SK-N-SH (cell line): ENCODE measurements at regions of chr3 and their contacts with region 1.

Region 1: GRCh38 chr3:58630076-58630709 is 36.4 kb downstream of the FAM3D start:
- DNase-seq: peak; percentile 85
- H3K4me3 ChIP-seq: no peak overlapping the region; a peak in 1 of 4 replicates
- H3K27ac ChIP-seq: no peak overlapping the region
- H3K4me1 ChIP-seq: peaks cover 24 to 35% of the 10 kb centered on the region in 2 experiments; a peak in 3 of 4 replicates
- H3K27me3 ChIP-seq: no peaks in the 10 kb centered on the region
- CTCF ChIP-seq: peak; percentile 92
- EP300 ChIP-seq: no peak
- RAD21 ChIP-seq: peak; percentile 89

Region 2: GRCh38 chr3:58463181-58463941 is 166.8 kb before region 1 on chr3:
- CTCF ChIA-PET with region 1: interaction called, 10 read pairs
- POLR2A ChIA-PET with region 1: no interaction called
- DNase-seq: peak; percentile 85
- H3K4me3 ChIP-seq: no peak overlapping the region; a peak in 1 of 4 replicates
- H3K27ac ChIP-seq: no peak overlapping the region
- H3K4me1 ChIP-seq: peaks cover 0 to 2% of the 10 kb centered on the region in 2 experiments; a peak in 1 of 4 replicates
- H3K27me3 ChIP-seq: no peaks in the 10 kb centered on the region
- CTCF ChIP-seq: peak; percentile 89
- EP300 ChIP-seq: no peak
- RAD21 ChIP-seq: peak; percentile 80

Region 3: GRCh38 chr3:58560771-58561311 is 69.4 kb before region 1 on chr3:
- CTCF ChIA-PET with region 1: interaction called, 446 read pairs
- POLR2A ChIA-PET with region 1: no interaction called
- DNase-seq: no peak
- H3K4me3 ChIP-seq: no peak overlapping the region
- H3K27ac ChIP-seq: no peak overlapping the region
- H3K4me1 ChIP-seq: peaks cover 4 to 6% of the 10 kb centered on the region in 2 experiments; a peak in 1 of 4 replicates
- H3K27me3 ChIP-seq: no peaks in the 10 kb centered on the region
- CTCF ChIP-seq: peak; percentile 63
- EP300 ChIP-seq: peak in 1 of 2 experiments; percentile 70; a peak in 1 of 4 replicates
- RAD21 ChIP-seq: peak; percentile 49; the same call in 1 of the 2 replicates

Region 4: DNA sequence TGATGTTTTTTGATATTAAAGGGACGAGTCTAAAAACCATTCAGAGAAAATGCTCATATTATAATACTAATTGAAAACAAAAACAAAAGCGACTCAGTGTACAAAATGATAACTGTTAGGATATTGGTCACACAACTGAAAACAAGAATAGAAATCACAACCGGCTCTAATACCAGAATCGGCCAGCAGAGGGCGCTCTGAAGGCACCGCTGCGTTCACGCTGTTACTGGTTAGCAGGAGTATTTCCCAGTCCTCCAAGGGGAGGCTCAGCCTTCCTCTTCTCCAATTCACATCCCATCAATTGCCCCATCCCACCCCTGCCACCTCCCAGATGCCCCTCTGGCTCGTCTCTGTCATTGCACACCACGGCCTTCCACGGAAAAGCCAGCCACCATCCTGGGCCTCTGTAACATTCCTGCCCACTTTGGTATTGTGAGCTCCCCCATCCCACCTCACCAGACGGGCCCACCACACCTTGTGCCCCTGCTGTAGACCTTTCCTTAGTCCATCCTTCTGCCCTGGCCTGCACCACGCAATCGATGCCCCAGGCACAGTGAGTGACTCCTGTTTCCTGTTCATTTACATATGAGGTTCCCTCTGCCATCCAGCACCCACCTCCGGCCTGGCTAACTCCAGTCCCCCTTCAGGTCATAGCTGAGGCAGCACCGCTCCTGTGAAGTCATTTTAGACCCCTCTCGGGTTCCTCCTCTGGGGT is 61.5 kb before region 1 on chr3:
- CTCF ChIA-PET with region 1: interaction called, 446 read pairs
- POLR2A ChIA-PET with region 1: no interaction called
- DNase-seq: peak; percentile 72
- H3K4me3 ChIP-seq: no peak overlapping the region; a peak in 1 of 4 replicates
- H3K27ac ChIP-seq: no peak overlapping the region
- H3K4me1 ChIP-seq: peaks cover 4 to 13% of the 10 kb centered on the region in 2 experiments; a peak in 1 of 4 replicates
- H3K27me3 ChIP-seq: no peaks in the 10 kb centered on the region
- CTCF ChIP-seq: peak; percentile 94
- EP300 ChIP-seq: no peak
- RAD21 ChIP-seq: peak; percentile 84

Region 5: DNA sequence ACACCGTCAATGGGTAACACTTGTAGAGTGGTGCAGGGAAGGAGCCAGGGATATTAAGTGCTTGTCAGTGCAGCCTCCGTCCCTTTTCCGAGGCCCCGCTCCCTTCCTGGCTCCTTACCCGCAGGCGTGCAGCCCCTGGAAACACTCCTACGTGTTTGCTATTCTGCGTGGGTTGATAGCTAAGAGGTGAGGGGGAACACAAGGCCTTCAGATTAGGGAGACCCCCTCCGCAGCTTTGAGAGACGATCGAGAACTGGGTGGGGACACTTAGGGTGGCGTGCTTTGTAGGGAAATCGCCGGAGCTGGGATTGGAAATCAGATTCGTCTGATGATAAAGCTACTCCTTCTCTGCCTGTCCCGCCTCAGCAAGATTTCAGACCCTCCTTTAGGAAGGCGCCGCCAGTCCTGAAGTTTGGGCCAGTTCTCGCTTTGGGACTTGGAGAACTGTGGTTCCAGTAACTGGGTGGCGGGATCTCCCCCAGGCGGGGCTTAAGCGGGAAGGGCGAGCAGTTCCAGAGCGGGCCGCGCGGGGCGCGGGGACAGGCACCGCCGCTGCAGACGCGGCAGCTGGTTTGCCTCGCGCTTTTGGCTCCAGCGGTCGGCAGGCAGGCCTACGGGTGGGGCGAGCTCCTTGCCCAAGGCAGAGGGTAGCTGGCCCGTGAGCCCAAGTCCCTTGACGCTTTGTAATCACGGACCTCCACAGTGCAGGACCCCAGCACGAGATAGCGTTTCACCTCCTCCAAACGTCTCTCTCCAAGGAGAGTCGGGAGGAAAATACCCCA is 45.0 kb before region 1 on chr3:
- CTCF ChIA-PET with region 1: interaction called, 14 read pairs
- POLR2A ChIA-PET with region 1: no interaction called
- DNase-seq: peak; percentile 94
- H3K4me3 ChIP-seq: peak overlapping the region; percentile 29 to 52
- H3K27ac ChIP-seq: no peak overlapping the region
- H3K4me1 ChIP-seq: peaks cover 0 to 6% of the 10 kb centered on the region in 2 experiments; a peak in 1 of 4 replicates
- H3K27me3 ChIP-seq: no peaks in the 10 kb centered on the region; the same call in 1 of the 2 replicates
- CTCF ChIP-seq: peak; percentile 58
- EP300 ChIP-seq: no peak
- RAD21 ChIP-seq: peak; percentile 23

Region 6: DNA sequence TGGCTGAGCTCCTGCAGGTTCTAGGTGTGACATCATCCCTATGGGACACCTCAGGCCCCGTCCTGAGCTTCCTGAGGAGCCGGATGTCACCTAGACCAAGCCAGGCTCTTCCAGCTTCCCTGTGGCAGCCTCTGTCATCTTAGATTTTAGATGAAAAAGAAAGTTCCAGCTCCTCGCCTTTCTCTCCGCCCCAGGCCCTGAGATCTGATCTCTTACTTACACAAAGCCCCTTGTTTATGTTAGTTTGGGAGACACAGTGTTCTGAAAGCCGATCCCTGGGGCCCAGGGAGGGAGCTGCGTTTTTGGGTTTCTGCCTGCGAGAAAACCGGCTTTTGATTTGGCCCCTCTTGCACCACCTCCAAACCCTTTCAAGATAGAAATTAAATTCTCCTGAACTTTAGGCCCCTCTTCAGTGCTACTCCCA is 12.8 kb before region 1 on chr3:
- CTCF ChIA-PET with region 1: interaction called, 11 read pairs
- POLR2A ChIA-PET with region 1: no interaction called
- DNase-seq: no peak
- H3K4me3 ChIP-seq: no peak overlapping the region
- H3K27ac ChIP-seq: no peak overlapping the region
- H3K4me1 ChIP-seq: peaks cover 0 to 3% of the 10 kb centered on the region in 2 experiments; a peak in 1 of 4 replicates
- H3K27me3 ChIP-seq: no peaks in the 10 kb centered on the region
- CTCF ChIP-seq: no peak
- EP300 ChIP-seq: no peak
- RAD21 ChIP-seq: no peak

Region 7: GRCh38 chr3:58640700-58641372 is 10.6 kb after region 1 on chr3:
- CTCF ChIA-PET with region 1: interaction called, 73 read pairs
- POLR2A ChIA-PET with region 1: no interaction called
- DNase-seq: peak; percentile 90
- H3K4me3 ChIP-seq: peak overlapping the region in 1 of 2 experiments; percentile 11; a peak in 1 of 4 replicates
- H3K27ac ChIP-seq: no peak overlapping the region
- H3K4me1 ChIP-seq: peaks cover 0 to 5% of the 10 kb centered on the region in 2 experiments; a peak in 1 of 4 replicates
- H3K27me3 ChIP-seq: no peaks in the 10 kb centered on the region
- CTCF ChIP-seq: peak; percentile 88
- EP300 ChIP-seq: no peak
- RAD21 ChIP-seq: peak; percentile 96

Region 8: DNA sequence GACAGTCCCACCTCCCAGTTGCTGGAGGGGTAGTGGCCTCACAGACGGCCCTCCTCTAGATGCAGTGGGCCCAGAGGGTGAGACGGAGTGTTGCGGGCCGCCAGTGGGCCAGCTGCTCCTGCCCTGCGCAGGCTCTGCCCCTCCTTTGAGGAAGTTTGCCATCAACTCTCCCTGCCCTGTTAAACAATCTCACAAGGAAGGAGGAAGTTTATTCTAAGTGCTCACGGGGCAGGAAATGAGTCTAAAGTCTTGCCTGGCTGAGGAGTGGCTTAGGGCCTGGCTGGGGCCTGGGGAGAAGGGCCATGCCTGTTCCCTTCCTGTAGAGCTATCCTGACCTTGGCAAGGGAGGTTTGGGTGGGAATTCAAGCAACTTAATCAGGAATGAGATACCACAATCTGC is 36.5 kb after region 1 on chr3 and contains the start of gene FAM3D:
- CTCF ChIA-PET with region 1: no interaction called
- POLR2A ChIA-PET with region 1: no interaction called
- DNase-seq: no peak
- H3K4me3 ChIP-seq: no peak within 1 kb of the TSS
- H3K27ac ChIP-seq: no peak within 1 kb of the TSS
- H3K4me1 ChIP-seq: no peaks in the 10 kb centered on the region
- H3K27me3 ChIP-seq: no peaks in the 10 kb centered on the region; the same call in 1 of the 2 replicates
- CTCF ChIP-seq: no peak
- EP300 ChIP-seq: no peak
- RAD21 ChIP-seq: no peak
- polyA plus RNA-seq, gene FAM3D: not detected in 2 replicates

Region 9: DNA sequence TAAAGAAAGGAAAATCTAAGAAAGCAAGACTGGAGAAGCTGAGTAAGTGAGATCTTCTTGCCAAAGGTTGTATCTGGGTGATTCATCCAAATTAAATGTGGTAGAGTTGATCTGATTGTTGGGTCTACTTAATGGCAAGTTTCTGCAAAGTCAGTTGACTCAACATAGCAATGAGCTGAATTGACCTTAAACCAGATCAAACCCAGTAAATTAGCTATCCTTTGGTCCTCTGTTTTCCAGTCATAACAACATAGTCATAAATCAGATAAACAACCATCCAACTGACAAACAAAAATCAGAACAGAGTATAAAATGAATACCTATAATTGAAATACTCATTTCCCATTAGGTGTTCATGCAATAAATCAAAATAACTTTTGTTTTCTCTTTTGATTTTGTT is 562.3 kb after region 1 on chr3:
- CTCF ChIA-PET with region 1: no interaction called
- POLR2A ChIA-PET with region 1: no interaction called
- DNase-seq: no peak
- H3K4me3 ChIP-seq: no peak overlapping the region
- H3K27ac ChIP-seq: peak overlapping the region in 1 of 2 experiments; percentile 86; a peak in 2 of 4 replicates
- H3K4me1 ChIP-seq: no peaks in the 10 kb centered on the region
- H3K27me3 ChIP-seq: no peaks in the 10 kb centered on the region
- CTCF ChIP-seq: no peak
- EP300 ChIP-seq: peak in 1 of 2 experiments; percentile 67; a peak in 2 of 4 replicates
- RAD21 ChIP-seq: no peak